Activated B cell treated with CpG ODN at 0.5 μM for 24 hours (primary cell): ENCODE measurements at regions of chr7 and their contacts with region 1.

Region 1: DNA sequence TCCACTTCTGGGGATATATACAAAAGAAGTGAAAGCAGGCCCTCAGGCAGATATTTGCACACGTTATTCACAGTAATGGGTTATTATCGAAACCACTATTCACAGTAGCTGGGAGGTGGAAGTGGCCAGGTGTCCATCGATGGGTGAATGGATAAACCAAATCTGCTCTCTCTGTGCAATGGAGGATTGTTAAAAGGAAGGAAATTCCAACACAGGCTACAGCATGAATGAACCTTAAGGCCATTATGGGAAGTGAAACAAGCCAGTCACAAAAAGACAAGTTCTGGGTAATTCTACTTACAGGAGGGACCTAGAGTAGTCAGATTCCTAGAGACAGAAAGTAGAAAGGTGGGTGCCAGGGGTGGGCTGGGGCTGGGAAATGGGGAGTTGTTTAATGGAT is 48.5 kb upstream of the BHLHA15 start:
- DNase-seq: no peak
- ATAC-seq: peak; percentile 40
- H3K4me3 Mint-ChIP-seq: no peak overlapping the region
- H3K27ac Mint-ChIP-seq: no peak overlapping the region
- H3K4me1 Mint-ChIP-seq: peaks cover 12% of the 10 kb centered on the region
- H3K27me3 Mint-ChIP-seq: peaks cover 2% of the 10 kb centered on the region
- CTCF ChIP-seq: no peak

Region 2: DNA sequence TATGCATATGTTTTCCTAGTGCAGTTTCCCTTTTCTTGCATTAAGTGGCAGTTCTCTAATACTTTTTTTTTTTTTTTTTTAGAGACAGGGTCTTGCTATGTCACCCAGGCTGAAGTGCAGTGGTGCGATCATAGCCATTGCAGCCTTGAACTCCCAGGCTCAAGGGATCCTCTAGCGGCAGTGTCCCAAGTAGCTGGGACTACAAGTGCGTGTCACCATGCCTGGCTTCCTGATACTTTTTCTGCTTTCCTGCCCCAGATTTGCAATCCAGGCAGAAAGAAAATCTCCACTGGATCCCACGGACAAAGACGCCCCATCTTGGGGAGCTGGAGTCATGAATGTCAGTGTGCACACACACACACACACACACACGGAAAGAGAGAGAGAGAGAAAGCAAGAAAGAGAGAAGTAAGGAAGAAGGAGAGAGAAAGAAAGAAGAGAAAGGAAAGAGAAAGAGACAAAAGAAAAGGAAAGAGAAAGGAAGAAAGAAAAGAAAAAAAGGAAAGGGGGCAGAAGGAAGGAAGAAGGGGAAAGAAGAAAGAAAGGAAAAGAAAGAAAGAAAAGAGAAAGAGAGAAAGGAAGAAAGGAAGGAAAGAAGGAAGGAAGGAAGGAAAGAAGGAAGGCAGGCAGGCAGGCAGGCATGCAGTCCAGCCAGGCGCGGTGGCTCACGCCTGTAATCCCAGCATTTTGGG is 135.3 kb before region 1 on chr7:
- CTCF ChIA-PET with region 1: interaction called, 248 read pairs
- POLR2A ChIA-PET with region 1: interaction called, 11 read pairs
- intact Hi-C with region 1: no loop called
- DNase-seq: no peak
- ATAC-seq: no peak
- H3K4me3 Mint-ChIP-seq: no peak overlapping the region
- H3K27ac Mint-ChIP-seq: no peak overlapping the region
- H3K4me1 Mint-ChIP-seq: no peaks in the 10 kb centered on the region
- H3K27me3 Mint-ChIP-seq: peaks cover 9% of the 10 kb centered on the region
- CTCF ChIP-seq: no peak

Region 3: DNA sequence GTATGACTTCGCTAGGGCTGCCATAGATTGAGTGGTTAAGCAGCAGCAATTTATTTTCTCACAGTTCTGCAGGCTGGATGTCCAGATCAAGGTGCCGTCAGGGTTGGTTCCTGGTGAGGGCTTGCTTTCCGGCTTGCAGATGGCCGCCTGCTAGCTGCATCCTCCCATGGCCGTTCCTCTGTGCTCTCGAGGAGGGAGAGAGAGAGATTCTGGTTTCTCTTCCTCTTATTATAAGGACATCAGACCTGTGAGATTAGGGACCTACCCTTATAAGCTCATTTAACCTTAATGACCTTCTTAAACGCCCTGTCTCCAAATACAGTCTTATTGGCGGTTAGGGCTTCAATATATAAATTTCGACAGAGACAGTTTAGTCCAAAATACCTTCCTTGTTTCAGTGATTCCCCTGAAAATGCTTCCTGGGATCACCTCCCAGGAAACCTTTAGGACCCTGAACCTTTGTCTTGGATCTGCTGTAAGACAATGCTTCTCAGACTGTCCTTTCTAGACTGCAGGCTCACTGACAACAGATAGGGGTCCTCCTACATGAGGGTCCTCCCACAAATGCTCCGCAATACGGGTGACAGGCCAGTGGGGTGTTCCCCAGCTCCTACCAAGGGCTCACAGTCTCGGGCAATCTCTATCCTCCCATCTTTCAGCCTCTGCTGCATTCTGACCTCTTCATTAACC is 320.7 kb after region 1 on chr7:
- CTCF ChIA-PET with region 1: no interaction called
- POLR2A ChIA-PET with region 1: no interaction called
- intact Hi-C with region 1: no loop called
- DNase-seq: no peak
- ATAC-seq: no peak
- H3K4me3 Mint-ChIP-seq: no peak overlapping the region
- H3K27ac Mint-ChIP-seq: no peak overlapping the region
- H3K4me1 Mint-ChIP-seq: no peaks in the 10 kb centered on the region
- H3K27me3 Mint-ChIP-seq: no peaks in the 10 kb centered on the region
- CTCF ChIP-seq: no peak

Region 4: GRCh38 chr7:99200691-99201440 is 1038.1 kb after region 1 on chr7:
- CTCF ChIA-PET with region 1: no interaction called
- POLR2A ChIA-PET with region 1: no interaction called
- intact Hi-C with region 1: no loop called
- DNase-seq: no peak
- ATAC-seq: no peak
- H3K4me3 Mint-ChIP-seq: no peak overlapping the region
- H3K27ac Mint-ChIP-seq: no peak overlapping the region
- H3K4me1 Mint-ChIP-seq: no peaks in the 10 kb centered on the region
- H3K27me3 Mint-ChIP-seq: peaks cover under 1% of the 10 kb centered on the region
- CTCF ChIP-seq: no peak